H1 (cell line): ENCODE measurements at regions of chr16 and their contacts with region 1.

Region 1: DNA sequence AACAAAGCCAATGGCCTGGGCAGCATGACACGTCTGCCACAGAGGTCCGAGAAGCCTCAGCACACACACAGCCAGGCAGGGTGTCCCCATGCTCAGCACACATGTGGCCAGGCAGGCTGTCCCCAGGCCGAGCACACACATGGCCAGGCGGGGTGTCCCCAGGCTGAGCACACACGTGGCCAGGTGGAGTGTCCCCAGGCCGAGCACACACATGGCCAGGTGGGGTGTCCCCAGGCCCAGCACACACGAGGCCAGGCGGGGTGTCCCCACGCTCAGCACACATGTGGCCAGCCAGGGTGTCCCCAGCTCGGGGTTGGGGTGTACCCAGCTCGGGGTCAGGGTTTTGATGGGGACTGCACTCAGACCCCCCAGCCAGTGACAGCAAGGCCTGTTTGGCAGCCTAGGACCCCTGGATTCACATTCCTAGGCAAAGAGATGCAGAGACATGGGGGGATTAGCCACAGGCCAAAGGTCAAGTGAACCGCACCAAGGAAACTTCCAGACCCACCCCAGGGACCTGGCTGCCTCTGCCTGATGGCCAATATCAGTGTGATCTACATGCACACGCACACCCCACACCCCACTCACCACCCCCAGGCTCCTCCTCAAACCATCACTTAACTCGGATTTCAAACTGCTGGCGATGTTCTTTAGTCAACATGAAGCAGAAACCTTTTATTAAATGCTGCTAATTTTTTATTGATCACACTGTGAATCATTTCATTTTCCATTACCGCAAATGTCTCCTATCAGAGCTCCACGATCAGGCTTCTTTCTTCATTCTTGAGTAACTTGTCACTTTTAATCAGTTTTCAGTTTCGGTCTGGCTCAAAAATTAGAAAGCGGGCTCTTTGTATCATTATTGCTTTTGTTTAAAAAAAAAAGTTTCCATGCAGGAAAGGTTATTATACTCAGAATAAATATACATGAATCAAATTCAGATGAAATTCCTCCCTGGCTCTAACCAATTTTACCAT is 111.4 kb downstream of the ZNF423 start:
- DNase-seq: no peak
- H3K4me3 ChIP-seq: no peak overlapping the region
- H3K27ac ChIP-seq: no peak overlapping the region; the same call in 1 of the 2 replicates
- H3K4me1 ChIP-seq: peaks cover 0 to 12% (median 3%) of the 10 kb centered on the region in 4 experiments; a peak in 5 of 7 replicates
- H3K27me3 ChIP-seq: no peaks in the 10 kb centered on the region
- CTCF ChIP-seq: no peak
- EP300 ChIP-seq: no peak
- POLR2A ChIP-seq: no peak
- RAD21 ChIP-seq: no peak

Region 2: GRCh38 chr16:49755313-49755620 is 10.7 kb after region 1 on chr16:
- CTCF ChIA-PET with region 1: interaction called, 7 read pairs
- POLR2A ChIA-PET with region 1: interaction called, 16 read pairs
- DNase-seq: no peak
- H3K4me3 ChIP-seq: peak overlapping the region in 3 of 4 experiments; percentile 11 to 52 (median 20); a peak in 4 of 8 replicates
- H3K27ac ChIP-seq: peak overlapping the region; percentile 35; the same call in 1 of the 2 replicates
- H3K4me1 ChIP-seq: peaks cover 16 to 37% (median 28%) of the 10 kb centered on the region in 4 experiments
- H3K27me3 ChIP-seq: no peaks in the 10 kb centered on the region
- CTCF ChIP-seq: peak in 2 of 3 experiments; percentile 26 to 52; a peak in 2 of 4 replicates
- EP300 ChIP-seq: no peak
- POLR2A ChIP-seq: no peak
- RAD21 ChIP-seq: peak in 1 of 2 experiments; percentile 41; a peak in 2 of 4 replicates